ENCODE measurements at regions of chr6 and their contacts with region 1.

Region 1: DNA sequence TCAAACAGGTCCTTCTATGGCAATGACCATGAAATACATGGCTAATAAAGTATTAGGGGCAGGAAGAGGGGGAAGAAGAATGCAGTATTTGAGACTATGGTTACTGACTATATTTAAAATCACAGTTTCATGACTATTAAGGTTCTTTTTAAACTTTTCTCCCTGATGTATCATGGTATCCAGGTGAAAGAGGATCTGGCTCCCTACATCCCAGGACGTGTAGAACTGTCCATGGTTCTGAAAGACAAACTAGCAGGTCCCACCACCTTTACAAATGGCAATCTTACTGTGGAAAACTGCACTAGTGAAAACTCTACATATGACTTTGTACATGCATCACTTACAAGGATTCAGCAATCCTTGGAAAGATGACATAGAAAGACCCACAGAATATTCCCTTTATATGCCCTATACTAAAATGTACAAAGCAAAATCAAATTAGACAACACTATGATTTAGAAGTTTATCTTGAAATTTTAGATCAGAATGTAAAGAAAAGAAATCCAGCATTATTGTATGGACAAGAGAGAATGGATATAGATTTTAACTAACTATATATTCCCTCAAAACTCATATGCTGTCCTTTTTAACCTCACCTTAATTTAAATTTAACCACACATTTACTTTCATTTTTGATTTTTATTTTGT is 33.5 kb downstream of the RPP21 start:
- DNase-seq: no peak
- H3K4me3 ChIP-seq: no peak overlapping the region
- H3K27ac ChIP-seq: no peak overlapping the region
- H3K4me1 ChIP-seq: no peaks in the 10 kb centered on the region
- H3K27me3 ChIP-seq: peaks cover 13 to 67% (median 35%) of the 10 kb centered on the region in 5 experiments

Region 2: GRCh38 chr6:30364591-30364990 is 13.8 kb before region 1 on chr6:
- CTCF ChIA-PET with region 1: interaction called, 10 read pairs
- POLR2A ChIA-PET with region 1: no interaction called
- DNase-seq: peak in 2 of 3 donors; percentile 38 to 40
- H3K4me3 ChIP-seq: no peak overlapping the region
- H3K27ac ChIP-seq: no peak overlapping the region
- H3K4me1 ChIP-seq: no peaks in the 10 kb centered on the region
- H3K27me3 ChIP-seq: peaks cover 25 to 90% (median 34%) of the 10 kb centered on the region in 5 experiments

Region 3: DNA sequence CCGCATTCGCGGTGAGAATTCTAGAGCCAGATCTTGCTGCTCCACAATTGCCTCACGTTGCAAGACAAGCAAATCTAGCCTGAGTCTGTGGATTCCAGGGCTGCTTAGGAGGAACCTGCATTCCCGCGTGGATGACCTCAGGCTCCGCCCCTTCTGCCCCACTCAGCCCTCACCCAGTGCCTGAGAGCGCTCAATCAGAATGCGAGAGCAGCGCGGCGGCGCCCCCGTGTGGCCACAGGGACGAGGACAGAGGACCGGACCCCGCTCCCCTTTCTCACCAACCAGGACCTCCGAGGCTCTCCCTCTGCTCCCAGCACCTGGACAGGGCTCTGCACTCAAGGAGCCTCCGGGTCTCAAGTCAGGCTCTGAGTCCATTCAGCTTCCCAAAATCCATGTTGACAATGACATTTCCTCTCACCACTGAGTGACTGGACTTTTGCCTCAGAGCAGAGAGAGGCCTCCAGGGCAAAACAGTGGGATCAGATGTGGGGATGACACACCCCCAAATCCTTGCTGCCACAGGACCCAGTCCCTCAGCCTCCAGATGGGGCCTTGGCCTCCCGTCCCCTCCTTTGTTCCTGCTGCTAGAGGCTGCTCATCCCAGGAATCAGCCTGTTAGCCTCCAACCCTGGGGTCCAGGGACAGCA is 18.5 kb after region 1 on chr6:
- CTCF ChIA-PET with region 1: interaction called, 13 read pairs
- POLR2A ChIA-PET with region 1: no interaction called
- DNase-seq: peak; percentile 75 to 81 (median 76)
- H3K4me3 ChIP-seq: no peak overlapping the region
- H3K27ac ChIP-seq: no peak overlapping the region
- H3K4me1 ChIP-seq: peaks cover 0 to 13% (median 8%) of the 10 kb centered on the region in 4 experiments
- H3K27me3 ChIP-seq: peaks cover 6 to 63% (median 34%) of the 10 kb centered on the region in 5 experiments